WTC11 (cell line): ENCODE measurements at regions of chr1 and their contacts with region 1.

Region 1: DNA sequence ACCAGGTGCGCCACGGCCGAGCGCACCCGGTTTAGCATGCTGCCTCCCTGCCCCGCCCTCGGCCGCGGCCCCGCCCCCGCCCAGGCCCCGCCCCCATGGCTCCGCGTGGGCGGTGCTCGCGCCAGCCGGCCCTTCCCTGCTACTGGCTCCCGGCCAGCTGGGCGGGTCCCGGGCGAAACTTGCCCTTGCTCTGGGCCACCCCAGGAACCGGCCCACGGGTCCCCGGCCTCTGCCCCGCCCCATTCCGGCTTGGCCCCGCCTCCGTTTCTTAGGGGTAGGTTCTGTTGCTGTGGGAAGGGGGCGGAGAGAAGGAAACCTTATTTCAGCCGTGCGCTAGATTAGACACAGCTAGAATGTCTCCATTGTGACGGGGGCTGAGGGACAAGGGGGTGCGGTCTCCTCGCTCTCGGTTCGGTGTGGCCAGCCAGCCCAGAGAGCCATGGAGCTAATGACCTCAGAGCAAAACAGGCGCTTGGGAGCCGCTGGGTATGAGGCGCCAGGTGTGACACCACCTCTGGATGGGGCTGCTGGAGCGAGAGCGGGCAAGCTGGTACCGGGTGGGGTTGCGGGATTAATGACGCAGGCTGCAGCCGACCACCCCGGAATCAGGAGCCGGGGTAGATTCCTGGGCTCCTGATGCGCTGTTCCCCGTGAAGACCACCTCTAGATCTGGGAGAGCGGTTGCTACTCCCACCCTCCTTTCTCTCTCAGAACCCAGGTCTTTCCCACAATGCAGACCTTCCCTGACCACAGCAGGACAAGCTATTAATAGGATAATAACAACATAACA is at the start of gene PPM1J:
- DNase-seq: peak; percentile 100
- ATAC-seq: peak; percentile 85
- H3K4me3 Mint-ChIP-seq: peak within 1 kb of the TSS; percentile 81
- H3K27ac Mint-ChIP-seq: no peak within 1 kb of the TSS
- H3K4me1 Mint-ChIP-seq: peaks cover 50% of the 10 kb centered on the region
- H3K27me3 Mint-ChIP-seq: peaks cover 43% of the 10 kb centered on the region
- CTCF ChIP-seq: no peak
- total RNA-seq, gene PPM1J: 19.3 to 23.5 TPM (median 22.6 TPM) in 3 replicates

Region 2: DNA sequence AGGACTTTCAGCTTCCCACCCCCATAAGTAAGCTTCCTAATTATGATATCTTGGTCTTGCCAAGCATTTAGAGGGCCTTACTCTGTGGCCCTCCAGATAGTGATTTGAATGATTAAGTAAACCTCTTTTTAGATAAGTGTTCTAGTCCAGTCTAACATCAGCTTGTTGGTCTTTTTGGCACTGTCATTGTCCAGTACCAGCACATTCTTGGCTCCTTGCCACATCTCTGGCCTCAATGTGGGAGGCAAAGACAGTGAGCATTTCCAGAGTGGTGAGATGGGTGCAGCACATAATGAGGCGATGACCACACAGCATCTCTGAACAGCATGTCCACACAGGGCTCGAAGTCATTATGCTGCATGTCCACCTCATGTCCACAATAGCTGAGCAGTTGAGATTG is 89.8 kb before region 1 on chr1:
- CTCF ChIA-PET with region 1: no interaction called
- POLR2A ChIA-PET with region 1: no interaction called
- DNase-seq: no peak
- ATAC-seq: no peak
- H3K4me3 Mint-ChIP-seq: no peak overlapping the region
- H3K27ac Mint-ChIP-seq: peak overlapping the region; percentile 65
- H3K4me1 Mint-ChIP-seq: peaks cover 9% of the 10 kb centered on the region
- H3K27me3 Mint-ChIP-seq: no peaks in the 10 kb centered on the region
- CTCF ChIP-seq: no peak

Region 3: GRCh38 chr1:112674439-112674985 is 40.9 kb before region 1 on chr1 and contains the start of gene MOV10:
- CTCF ChIA-PET with region 1: interaction called, 23 read pairs
- POLR2A ChIA-PET with region 1: interaction called, 5 read pairs
- DNase-seq: peak; percentile 72
- ATAC-seq: peak; percentile 85
- H3K4me3 Mint-ChIP-seq: peak within 1 kb of the TSS; percentile 89
- H3K27ac Mint-ChIP-seq: peak within 1 kb of the TSS; percentile 92
- H3K4me1 Mint-ChIP-seq: peaks cover 68% of the 10 kb centered on the region
- H3K27me3 Mint-ChIP-seq: peaks cover 10% of the 10 kb centered on the region; the same call in 1 of the 2 replicates
- CTCF ChIP-seq: no peak
- total RNA-seq, gene MOV10: 80.7 to 99.1 TPM (median 98.8 TPM) in 3 replicates

Region 4: GRCh38 chr1:112688781-112689193 is 26.7 kb before region 1 on chr1:
- CTCF ChIA-PET with region 1: no interaction called
- POLR2A ChIA-PET with region 1: no interaction called
- DNase-seq: no peak
- ATAC-seq: no peak
- H3K4me3 Mint-ChIP-seq: no peak overlapping the region
- H3K27ac Mint-ChIP-seq: peak overlapping the region; percentile 27
- H3K4me1 Mint-ChIP-seq: peaks cover 14% of the 10 kb centered on the region
- H3K27me3 Mint-ChIP-seq: no peaks in the 10 kb centered on the region
- CTCF ChIP-seq: no peak

Region 5: DNA sequence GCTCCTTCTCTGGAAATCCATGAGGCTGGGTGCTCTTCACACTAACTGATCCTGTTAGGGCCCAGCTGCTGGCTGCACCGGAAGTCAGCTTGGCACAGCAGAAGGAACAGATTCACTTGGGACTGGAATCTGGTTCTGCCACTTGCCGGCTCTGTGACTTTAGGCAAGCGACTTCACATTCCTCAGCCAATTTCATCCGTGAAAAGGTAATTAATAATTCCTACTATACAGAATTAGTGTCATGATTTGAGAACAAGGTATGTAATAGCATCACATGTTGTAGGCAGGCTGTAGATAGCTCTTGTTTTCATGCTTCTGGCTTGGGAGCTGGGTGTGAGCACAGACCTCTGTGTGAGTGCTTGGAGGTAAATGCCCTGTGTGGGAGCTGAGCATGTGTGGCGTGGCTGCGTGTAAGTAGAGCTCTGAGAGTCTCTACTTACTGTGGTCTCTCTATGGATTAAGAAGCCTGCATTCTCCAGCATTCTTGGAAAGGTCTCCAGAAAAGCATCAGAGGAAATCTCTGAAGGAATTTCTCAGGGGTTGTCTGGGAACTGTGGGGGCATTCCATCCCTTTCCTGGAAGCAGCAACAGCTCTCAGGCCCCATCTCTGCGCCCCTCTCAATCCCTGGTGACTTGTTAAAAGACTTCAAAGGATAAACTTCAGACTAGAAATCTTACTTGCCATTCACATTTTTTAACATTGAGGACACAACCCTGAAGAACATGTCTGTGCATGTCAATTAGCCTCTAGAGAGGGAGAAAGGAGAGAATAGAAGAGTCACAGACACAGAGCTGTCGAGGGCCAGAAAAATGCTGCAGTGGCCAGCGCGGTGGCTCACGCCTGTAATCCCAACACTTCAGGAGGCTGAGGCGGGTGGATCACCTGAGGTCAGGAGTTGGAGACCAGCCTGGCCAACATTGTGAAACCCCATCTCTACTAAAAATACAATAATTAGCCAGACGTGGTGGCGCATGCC is 47.4 kb after region 1 on chr1:
- CTCF ChIA-PET with region 1: interaction called, 10 read pairs
- POLR2A ChIA-PET with region 1: no interaction called
- DNase-seq: no peak
- ATAC-seq: peak; percentile 14; the same call in 1 of the 2 replicates
- H3K4me3 Mint-ChIP-seq: no peak overlapping the region
- H3K27ac Mint-ChIP-seq: peak overlapping the region; percentile 28
- H3K4me1 Mint-ChIP-seq: peaks cover 37% of the 10 kb centered on the region
- H3K27me3 Mint-ChIP-seq: peaks cover 17% of the 10 kb centered on the region
- CTCF ChIP-seq: no peak

Region 6: GRCh38 chr1:112818990-112819689 is 103.7 kb after region 1 on chr1:
- CTCF ChIA-PET with region 1: interaction called, 18 read pairs
- POLR2A ChIA-PET with region 1: no interaction called
- DNase-seq: no peak
- ATAC-seq: no peak
- H3K4me3 Mint-ChIP-seq: peak overlapping the region; percentile 14; the same call in 1 of the 2 replicates
- H3K27ac Mint-ChIP-seq: peak overlapping the region; percentile 98
- H3K4me1 Mint-ChIP-seq: peaks cover 45% of the 10 kb centered on the region
- H3K27me3 Mint-ChIP-seq: no peaks in the 10 kb centered on the region
- CTCF ChIP-seq: no peak

Region 7: DNA sequence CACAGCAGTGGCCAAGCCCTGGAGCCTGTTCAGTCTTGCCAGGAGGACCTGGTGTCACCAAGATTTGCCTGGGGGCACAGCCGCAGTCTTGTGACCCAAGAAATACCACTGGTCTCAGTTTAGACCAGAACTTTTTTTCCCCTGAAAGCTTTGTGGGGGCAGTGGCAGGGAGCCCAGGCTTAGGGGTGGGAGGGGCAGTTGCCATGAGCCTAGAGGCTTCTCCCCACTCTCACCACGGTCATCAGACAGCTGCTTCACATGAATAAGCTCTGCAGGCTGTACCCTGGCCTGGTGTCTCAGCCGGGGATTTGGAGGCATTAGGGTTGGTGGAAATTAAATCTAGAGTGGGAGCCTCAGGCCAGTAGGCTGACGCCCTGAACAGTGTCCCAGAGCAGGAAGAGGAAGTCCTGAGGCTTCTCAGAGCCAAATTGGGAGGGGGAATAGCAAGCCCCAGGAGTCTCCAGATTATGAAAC is 166.8 kb after region 1 on chr1:
- CTCF ChIA-PET with region 1: interaction called, 25 read pairs
- POLR2A ChIA-PET with region 1: no interaction called
- DNase-seq: no peak
- ATAC-seq: no peak
- H3K4me3 Mint-ChIP-seq: no peak overlapping the region
- H3K27ac Mint-ChIP-seq: no peak overlapping the region
- H3K4me1 Mint-ChIP-seq: peaks cover 53% of the 10 kb centered on the region
- H3K27me3 Mint-ChIP-seq: no peaks in the 10 kb centered on the region
- CTCF ChIP-seq: no peak